Transverse colon (tissue), 4 donors: ENCODE measurements at regions of chr10 and their contacts with region 1.

Region 1: DNA sequence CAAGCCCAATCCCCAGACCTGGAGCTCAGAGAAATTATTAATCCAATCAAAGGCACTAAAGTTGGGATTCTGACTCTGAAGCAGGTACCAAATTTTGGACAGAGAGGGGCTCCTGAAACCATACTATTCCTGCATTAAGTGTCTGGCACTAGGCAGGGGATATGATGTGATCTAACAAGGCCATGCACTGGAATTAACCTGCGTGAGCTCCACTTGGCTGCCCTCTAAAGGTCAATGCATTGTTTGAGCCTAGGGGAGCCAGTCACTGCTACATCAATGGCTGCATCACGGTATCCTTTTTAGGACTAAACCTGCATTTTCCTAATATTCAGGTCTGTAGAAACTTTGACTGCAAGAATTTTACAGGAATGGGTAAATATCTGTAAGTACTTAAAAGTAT is 42.1 kb downstream of the ST8SIA6 start:
- DNase-seq: no peak
- H3K4me3 ChIP-seq: no peak overlapping the region
- H3K27ac ChIP-seq: no peak overlapping the region
- H3K4me1 ChIP-seq: no peaks in the 10 kb centered on the region
- H3K27me3 ChIP-seq: no peaks in the 10 kb centered on the region
- CTCF ChIP-seq: no peak
- EP300 ChIP-seq: no peak
- POLR2A ChIP-seq: no peak

Region 2: GRCh38 chr10:18113881-18114280 is 701.6 kb after region 1 on chr10:
- in situ Hi-C with region 1: no loop called
- intact Hi-C with region 1: loop called (anchors 5 kb)
- DNase-seq: no peak
- H3K4me3 ChIP-seq: no peak overlapping the region
- H3K27ac ChIP-seq: no peak overlapping the region
- H3K4me1 ChIP-seq: peaks cover 0 to 3% (median 0%) of the 10 kb centered on the region in 4 donors
- H3K27me3 ChIP-seq: no peaks in the 10 kb centered on the region
- CTCF ChIP-seq: no peak
- EP300 ChIP-seq: no peak
- POLR2A ChIP-seq: no peak